Left colon (tissue), 2 donors: ENCODE measurements at regions of chr21 and their contacts with region 1.

Region 1: GRCh38 chr21:31088315-31088714 is 50.0 kb upstream of the KRTAP19-8 start:
- DNase-seq: no peak
- ATAC-seq: no peak

Region 2: GRCh38 chr21:30044445-30045064 is 1043.8 kb before region 1 on chr21:
- intact Hi-C with region 1: loop called in 1 of 2 experiments (anchors 10 kb)
- DNase-seq: no peak
- ATAC-seq: peak; percentile 25

Region 3: DNA sequence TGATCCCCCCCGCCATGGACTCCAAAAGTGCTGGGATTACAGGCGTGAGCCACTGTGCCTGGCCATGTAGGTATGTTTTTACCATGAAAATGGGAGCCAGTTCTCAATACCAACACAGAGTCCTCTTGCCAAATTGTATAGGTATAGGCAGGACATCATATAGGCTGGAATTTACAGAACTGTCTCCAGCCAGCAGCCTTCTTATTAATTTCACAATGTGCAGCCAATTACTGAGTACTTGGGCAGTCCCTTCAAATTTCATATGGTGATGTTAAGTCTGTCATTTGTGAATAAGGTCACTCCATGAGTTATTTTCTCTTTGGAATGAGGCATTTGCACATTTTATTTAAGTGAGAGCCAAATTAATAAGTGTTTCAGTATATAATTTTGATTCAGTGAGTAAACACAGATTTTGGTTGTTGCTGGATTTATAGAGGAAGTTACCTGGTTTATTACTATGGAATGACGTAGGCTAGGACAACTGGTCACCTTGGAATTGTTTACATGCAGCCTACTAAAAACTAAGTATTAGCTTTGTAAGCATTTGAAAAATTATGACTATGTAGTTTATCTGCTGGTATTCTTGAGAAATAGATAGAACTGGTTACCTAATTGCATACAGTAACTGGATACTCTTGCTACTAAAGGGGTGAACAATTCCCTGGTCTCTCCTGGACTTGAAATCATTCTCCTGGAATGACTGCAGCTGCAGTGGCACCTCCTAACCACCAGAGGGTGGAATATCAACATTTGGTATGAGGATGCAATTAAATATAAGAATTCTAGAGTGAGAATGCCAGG is 747.7 kb before region 1 on chr21:
- intact Hi-C with region 1: loop called in 1 of 2 experiments (anchors 10 kb)
- DNase-seq: peak; percentile 28 to 46
- ATAC-seq: peak; percentile 60